ENCODE measurements at regions of chr19 and their contacts with region 1.

Region 1: GRCh38 chr19:10835754-10836477 is at the start of gene TMED1:
- DNase-seq: peak; percentile 100
- ATAC-seq: peak; percentile 88
- H3K4me3 ChIP-seq: peak within 1 kb of the TSS; percentile 69
- H3K27ac ChIP-seq: peak within 1 kb of the TSS; percentile 81
- H3K4me1 ChIP-seq: peaks cover 16% of the 10 kb centered on the region
- H3K27me3 ChIP-seq: no peaks in the 10 kb centered on the region
- CTCF ChIP-seq: peak; percentile 33; the same call in 1 of the 2 replicates
- total RNA-seq, gene TMED1: 81.2 and 94.6 TPM in 2 replicates

Region 2: DNA sequence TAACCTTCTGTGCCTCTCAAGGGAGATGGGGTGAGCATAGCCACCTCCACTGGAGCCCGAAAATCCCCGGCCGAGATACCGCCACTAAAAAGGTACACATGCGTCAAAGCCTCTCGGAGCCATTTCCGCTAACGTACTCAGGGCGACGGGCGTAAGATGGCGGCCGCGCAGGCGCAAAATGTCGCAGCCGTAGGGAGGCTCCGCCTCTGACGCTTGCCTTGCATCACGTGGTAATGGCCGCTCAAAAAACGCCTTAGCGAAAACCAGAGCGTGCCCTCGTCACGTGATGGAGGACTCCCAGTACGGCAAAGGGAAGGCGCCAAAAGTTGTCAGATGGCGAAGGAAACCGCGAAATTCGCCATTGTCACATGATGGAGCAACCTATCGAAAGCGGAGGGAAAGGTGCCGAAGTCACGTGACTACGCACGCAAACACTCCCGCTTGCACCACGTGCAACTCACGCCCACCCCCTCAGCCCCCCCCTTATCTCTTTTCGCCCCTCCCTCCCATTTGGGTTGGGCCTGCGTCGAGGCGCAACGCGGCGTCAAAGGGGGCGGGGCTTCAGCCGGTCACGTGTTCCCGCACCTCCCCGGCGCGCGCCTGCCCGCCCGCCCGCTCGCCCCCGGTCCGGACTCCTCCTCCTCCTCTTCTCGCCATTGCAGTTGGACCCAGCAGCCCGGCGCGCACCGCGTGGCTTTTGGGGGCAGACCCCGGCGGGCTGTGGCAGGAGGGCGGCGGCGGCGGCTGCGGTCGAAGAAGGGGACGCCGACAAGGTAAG is 182.0 kb before region 1 on chr19 and contains the start of gene ILF3:
- CTCF ChIA-PET with region 1: no interaction called
- POLR2A ChIA-PET with region 1: no interaction called
- intact Hi-C with region 1: loop called (anchors 2 kb)
- DNase-seq: peak; percentile 100
- ATAC-seq: peak; percentile 74
- H3K4me3 ChIP-seq: peak within 1 kb of the TSS; percentile 94
- H3K27ac ChIP-seq: peak within 1 kb of the TSS; percentile 88
- H3K4me1 ChIP-seq: peaks cover 19% of the 10 kb centered on the region
- H3K27me3 ChIP-seq: no peaks in the 10 kb centered on the region
- CTCF ChIP-seq: no peak
- total RNA-seq, gene ILF3: 322 and 441 TPM in 2 replicates

Region 3: DNA sequence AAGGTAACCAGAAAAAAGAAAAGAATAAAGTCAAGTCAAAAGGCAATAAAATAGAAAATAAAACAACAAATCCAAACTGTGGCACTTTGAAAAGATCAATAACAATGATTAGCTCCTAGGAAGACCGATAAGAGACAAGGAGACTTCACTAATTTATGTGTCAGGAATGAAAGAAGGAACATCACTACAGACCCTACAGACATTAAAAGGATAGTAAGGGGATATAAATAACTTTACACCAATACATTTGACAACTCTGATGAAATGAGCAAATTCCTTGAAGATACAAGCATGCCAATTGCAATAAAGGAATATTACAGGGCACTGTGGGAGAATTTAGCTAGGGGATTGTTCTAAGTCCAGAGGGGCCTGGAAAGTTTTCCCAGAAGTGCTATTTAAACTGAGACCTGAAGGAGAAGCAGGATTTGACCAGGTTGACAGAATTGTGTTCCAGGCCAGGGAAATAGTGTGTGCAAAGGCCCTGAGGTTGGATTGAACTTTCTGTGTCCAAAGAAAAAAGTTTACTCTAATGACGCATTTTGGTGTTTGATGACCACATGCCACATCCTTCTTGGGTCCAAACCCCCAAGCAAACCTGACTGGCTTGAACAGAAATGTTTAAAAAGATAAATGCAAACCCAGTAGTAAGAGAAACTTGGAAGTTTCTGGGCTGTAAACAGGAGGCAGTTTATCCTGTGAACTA is 10.7 kb after region 1 on chr19:
- CTCF ChIA-PET with region 1: no interaction called
- POLR2A ChIA-PET with region 1: no interaction called
- intact Hi-C with region 1: no loop called
- DNase-seq: no peak
- ATAC-seq: no peak
- H3K4me3 ChIP-seq: no peak overlapping the region
- H3K27ac ChIP-seq: no peak overlapping the region
- H3K4me1 ChIP-seq: no peaks in the 10 kb centered on the region
- H3K27me3 ChIP-seq: no peaks in the 10 kb centered on the region
- CTCF ChIP-seq: no peak

Region 4: DNA sequence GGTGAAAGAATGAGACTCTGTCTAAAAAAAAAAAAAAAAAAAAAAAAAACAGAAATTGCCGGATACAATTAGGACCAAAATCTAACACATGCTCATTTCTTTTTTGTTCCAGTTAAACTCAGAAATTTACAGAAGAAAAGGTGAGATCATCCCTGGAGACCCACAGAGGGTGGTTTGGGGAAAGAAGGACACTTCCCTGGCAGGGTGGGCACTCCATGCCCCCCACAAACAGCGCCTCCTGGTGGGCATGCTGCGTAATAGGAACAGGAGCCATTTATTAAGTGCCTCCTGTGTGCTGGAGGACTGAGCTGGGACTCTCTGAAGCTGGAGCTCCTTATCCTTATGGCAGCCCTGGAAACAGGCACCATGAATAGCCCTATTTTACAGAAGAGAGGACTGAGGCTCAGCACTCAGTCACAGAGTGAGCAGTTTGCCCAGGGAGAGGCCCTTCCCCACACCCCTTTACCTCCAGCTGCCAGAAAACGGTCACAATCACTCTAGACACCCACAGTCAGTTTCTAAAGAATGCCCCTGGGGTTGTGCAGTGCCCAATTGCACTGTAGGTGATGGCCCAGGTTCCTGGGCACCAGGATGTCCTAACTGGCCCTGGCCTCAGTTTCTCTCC is 22.4 kb after region 1 on chr19:
- CTCF ChIA-PET with region 1: interaction called, 11 read pairs
- POLR2A ChIA-PET with region 1: no interaction called
- intact Hi-C with region 1: no loop called
- DNase-seq: peak; percentile 42
- ATAC-seq: no peak
- H3K4me3 ChIP-seq: no peak overlapping the region
- H3K27ac ChIP-seq: no peak overlapping the region
- H3K4me1 ChIP-seq: no peaks in the 10 kb centered on the region
- H3K27me3 ChIP-seq: no peaks in the 10 kb centered on the region
- CTCF ChIP-seq: peak; percentile 97

Region 5: DNA sequence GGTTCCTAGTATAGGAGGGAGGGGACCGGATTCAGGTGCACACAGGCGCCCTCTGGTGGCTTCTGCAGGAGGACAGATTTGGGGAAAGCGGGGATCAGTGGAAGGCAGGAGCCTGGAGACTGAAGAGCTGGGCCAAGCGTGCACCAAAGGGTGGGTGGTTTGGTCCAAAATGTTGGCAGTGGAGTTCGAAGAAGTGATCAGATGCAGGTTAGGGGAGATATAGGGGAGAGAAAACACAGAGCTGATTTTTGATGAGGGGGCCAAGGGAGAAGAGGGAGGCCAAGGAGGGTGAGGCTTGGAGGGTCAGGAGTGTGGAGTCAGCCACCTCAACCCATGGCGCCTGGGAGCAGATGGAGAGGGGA is 28.6 kb after region 1 on chr19:
- CTCF ChIA-PET with region 1: interaction called, 21 read pairs
- POLR2A ChIA-PET with region 1: no interaction called
- intact Hi-C with region 1: loop called (anchors 1 kb)
- DNase-seq: peak; percentile 90
- ATAC-seq: peak; percentile 97
- H3K4me3 ChIP-seq: no peak overlapping the region
- H3K27ac ChIP-seq: no peak overlapping the region
- H3K4me1 ChIP-seq: peaks cover 3% of the 10 kb centered on the region; the same call in 1 of the 2 replicates
- H3K27me3 ChIP-seq: no peaks in the 10 kb centered on the region
- CTCF ChIP-seq: peak; percentile 96

Region 6: GRCh38 chr19:10884274-10884673 is 48.4 kb after region 1 on chr19:
- CTCF ChIA-PET with region 1: no interaction called
- POLR2A ChIA-PET with region 1: no interaction called
- intact Hi-C with region 1: no loop called
- DNase-seq: peak; percentile 65
- ATAC-seq: peak; percentile 78
- H3K4me3 ChIP-seq: no peak overlapping the region
- H3K27ac ChIP-seq: no peak overlapping the region
- H3K4me1 ChIP-seq: peaks cover 7% of the 10 kb centered on the region; the same call in 1 of the 2 replicates
- H3K27me3 ChIP-seq: no peaks in the 10 kb centered on the region
- CTCF ChIP-seq: no peak

Region 7: GRCh38 chr19:11242864-11243797 is 407.2 kb after region 1 on chr19:
- CTCF ChIA-PET with region 1: no interaction called
- POLR2A ChIA-PET with region 1: no interaction called
- intact Hi-C with region 1: no loop called
- DNase-seq: peak; percentile 91
- ATAC-seq: peak; percentile 97
- H3K4me3 ChIP-seq: no peak overlapping the region
- H3K27ac ChIP-seq: no peak overlapping the region
- H3K4me1 ChIP-seq: 0 out of 2 replicates have a peak, but pooled peaks cover 3% of the 10 kb centered on the region
- H3K27me3 ChIP-seq: no peaks in the 10 kb centered on the region
- CTCF ChIP-seq: peak; percentile 92

Measured in PC-3 (cell line).